Right ventricle myocardium inferior (tissue), 1 donor: ENCODE measurements at regions of chr5 and their contacts with region 1.

Region 1: DNA sequence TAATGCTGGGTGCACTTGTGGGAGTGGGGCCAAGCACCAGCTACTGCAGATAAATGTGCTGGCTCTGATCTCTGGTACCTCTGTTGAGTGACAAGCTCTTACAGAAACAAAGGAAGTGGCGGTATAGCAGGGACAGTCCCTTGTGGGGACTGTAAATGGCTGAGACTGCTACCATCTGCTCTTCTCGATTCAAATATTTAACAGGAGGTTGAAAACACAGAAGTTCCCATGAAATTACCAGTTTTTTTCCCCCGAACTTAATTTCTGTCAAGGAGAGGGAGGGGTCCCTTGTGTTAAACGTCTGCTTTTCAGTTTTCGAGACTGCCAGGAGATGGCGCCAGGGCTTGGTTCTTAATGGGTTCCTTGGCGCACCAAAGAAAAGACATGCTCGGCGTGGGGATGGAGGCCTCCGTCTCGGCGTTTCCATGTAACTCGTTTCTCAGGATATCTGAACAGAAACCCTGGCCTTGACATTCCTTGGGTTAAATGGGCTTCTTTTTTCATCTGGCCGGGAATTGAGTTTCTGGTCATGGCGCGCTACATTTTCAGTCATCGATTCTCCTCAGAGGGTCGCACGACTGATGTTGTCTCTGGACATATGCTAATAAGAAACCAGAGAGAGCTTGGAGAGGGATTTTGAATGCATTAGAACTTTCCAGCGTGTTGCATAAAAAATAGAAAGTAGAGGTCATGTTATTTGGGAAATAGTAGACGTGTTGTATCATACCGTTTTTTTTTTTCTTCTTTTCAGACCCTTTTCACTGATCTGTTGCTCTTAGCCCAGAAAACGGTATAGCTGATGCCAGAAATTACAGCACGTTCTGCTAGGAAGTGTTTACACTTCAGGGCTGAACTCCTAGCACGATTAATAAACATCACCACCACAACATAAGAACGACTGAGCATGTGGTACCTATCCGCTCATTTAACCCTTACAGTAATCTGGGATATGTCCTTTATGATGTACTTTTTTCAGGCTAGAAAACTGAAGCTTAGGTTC is 64.0 kb downstream of the CARTPT start:
- DNase-seq: peak; percentile 82
- ATAC-seq: peak; percentile 85

Region 2: GRCh38 chr5:71455427-71456361 is 327.4 kb before region 1 on chr5 and contains the start of gene BDP1:
- intact Hi-C with region 1: no loop called
- DNase-seq: peak; percentile 98
- ATAC-seq: peak; percentile 97
- total RNA-seq, gene BDP1: 13.8 TPM

Region 3: DNA sequence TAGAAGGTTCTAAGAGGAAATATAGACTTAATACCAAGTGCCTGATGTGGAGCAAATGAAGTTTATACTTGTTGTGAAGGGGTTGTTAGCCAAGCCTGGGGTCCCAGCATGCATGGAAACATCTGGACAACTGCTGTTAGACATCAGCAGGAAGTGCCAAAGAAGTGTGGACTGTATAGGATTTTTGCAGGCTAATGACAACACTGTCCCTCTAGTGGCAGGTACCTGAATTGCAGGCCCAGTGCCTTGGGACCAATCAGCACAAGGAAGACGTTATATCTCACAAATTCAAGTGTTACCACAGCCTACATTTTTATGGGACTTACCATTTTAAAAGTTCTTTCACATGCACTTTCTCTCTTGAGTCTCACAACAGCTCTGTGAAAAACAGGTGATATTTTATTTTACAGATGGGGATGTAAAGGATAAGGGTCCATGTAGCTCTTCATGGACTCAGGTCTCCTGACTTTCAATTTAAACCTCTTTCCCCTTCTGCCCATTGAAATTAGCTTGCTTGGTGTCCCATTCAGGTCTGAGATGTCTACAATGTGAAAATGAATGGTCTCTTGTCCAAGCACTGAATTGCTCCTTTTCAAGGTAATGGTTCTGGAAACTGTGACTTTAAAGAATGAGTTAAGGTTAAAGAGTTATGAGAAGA is 235.2 kb after region 1 on chr5:
- intact Hi-C with region 1: loop called (anchors 5 kb)
- DNase-seq: no peak
- ATAC-seq: no peak

Region 4: GRCh38 chr5:72307968-72308852 is 525.1 kb after region 1 on chr5:
- intact Hi-C with region 1: loop called (anchors 1 kb)
- DNase-seq: peak; percentile 99
- ATAC-seq: peak; percentile 99